ENCODE measurements at regions of chr10 and their contacts with region 1.

Region 1: DNA sequence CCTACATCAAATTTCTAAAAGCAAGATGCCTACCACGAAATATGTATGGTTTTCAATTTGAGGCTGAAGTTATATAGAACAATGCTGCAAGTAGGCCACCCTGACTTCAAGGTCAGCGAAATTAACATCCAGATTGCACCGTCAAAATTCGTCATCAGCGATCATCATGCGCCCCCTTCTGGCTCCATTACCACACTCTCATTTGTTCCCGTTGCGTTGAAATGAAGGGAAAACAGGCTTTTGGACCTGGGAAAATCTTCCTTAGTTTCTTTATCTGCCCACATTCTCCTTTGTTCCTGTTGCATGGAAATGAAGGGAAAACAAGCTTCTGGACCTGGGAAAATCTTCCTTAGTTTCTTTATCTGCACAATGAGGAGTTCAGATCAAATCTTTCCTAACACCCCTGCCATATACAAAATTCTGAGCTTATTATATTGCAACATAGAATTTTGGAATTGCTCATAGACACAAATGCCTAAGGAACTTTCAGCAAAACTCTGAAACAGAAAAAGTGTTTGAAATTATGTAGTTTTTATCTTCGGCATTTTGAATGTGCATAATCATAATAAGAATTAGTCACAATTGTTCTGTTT is 98.2 kb upstream of the PRKCQ start:
- DNase-seq: peak; percentile 50 to 75
- ATAC-seq: no peak
- H3K4me3 ChIP-seq: no peak overlapping the region
- H3K27ac ChIP-seq: no peak overlapping the region
- H3K4me1 ChIP-seq: no peaks in the 10 kb centered on the region
- H3K27me3 ChIP-seq: no peaks in the 10 kb centered on the region

Region 2: DNA sequence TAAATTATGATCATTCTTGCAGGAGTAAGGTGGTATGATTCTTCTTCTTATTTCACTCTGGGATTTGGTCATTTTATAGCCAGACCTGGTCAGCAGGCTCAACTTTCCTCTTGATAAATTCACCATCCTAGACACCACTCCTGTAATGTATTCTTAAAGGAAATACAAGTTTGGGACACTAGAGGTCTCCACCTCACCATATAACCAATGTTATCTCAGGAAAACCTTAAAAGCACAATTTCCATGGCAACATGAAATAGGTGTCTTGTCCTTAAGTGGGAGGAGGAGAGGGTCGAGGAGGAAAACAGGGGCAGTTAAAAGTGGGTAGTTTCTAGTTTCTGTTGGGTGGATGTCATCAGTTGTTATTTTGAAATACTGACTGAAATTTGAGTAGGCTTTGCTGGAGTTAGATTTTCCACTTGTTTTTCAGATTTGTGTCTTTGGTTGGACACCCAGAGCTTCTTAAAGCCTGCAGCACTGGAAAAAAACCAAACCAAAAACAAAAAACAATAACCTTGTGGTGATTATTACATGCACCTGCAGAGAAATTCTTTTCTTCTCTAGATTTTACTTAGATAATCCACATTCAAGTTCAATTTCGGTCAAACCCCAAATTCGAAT is 261.3 kb before region 1 on chr10:
- intact Hi-C with region 1: loop called (anchors 5 kb)
- DNase-seq: no peak
- ATAC-seq: peak; percentile 74
- H3K4me3 ChIP-seq: no peak overlapping the region
- H3K27ac ChIP-seq: no peak overlapping the region
- H3K4me1 ChIP-seq: no peaks in the 10 kb centered on the region
- H3K27me3 ChIP-seq: no peaks in the 10 kb centered on the region

Region 3: DNA sequence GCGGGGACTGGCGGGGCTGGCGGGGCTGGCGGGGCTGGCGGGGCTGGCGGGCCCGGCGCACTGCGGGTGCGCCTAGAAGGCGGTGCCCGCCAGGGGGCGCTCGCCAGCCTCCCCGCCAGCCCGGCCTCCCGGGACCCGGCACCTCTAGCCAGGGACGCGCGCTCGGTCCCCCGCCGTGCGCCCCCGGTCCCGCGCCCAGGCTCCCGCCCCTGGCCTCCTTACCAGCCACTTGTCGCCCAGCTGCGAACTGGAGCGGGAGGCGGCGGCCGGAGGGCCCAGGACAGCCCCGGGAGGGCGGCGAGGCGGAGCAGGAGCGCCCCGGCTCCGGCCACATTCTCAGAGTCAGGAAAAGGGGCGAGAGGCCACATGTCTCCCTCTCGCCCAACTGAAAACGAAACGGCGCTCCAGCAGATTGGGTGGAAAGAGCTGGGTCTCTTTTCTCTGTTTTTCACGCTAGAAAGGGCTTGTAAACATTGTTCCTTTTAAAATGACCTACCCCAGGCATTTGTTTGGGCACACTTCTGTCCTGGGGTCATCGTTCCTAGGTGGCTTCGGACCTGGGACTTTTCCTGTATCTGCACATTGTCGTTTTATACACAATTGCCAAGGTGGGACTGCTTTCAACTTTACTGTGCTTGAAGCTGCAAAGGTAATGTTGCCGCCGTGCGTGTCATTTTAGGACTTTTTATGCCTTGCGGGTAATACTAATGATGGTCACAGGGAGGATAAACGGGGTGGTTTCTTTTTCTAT is 97.9 kb before region 1 on chr10:
- intact Hi-C with region 1: loop called in 1 of 2 experiments (anchors 10 kb)
- DNase-seq: peak; percentile 76 to 90
- ATAC-seq: peak; percentile 81
- H3K4me3 ChIP-seq: peak overlapping the region; percentile 45 to 62
- H3K27ac ChIP-seq: no peak overlapping the region
- H3K4me1 ChIP-seq: no peaks in the 10 kb centered on the region
- H3K27me3 ChIP-seq: peaks cover 0 to 3% of the 10 kb centered on the region in 2 donors

Region 4: GRCh38 chr10:6612371-6612770 is 65.9 kb before region 1 on chr10:
- intact Hi-C with region 1: no loop called
- DNase-seq: no peak
- ATAC-seq: no peak
- H3K4me3 ChIP-seq: no peak overlapping the region
- H3K27ac ChIP-seq: no peak overlapping the region
- H3K4me1 ChIP-seq: no peaks in the 10 kb centered on the region
- H3K27me3 ChIP-seq: peaks cover 0 to 1% of the 10 kb centered on the region in 2 donors